ENCODE measurements at regions of chr9 and their contacts with region 1.

Region 1: DNA sequence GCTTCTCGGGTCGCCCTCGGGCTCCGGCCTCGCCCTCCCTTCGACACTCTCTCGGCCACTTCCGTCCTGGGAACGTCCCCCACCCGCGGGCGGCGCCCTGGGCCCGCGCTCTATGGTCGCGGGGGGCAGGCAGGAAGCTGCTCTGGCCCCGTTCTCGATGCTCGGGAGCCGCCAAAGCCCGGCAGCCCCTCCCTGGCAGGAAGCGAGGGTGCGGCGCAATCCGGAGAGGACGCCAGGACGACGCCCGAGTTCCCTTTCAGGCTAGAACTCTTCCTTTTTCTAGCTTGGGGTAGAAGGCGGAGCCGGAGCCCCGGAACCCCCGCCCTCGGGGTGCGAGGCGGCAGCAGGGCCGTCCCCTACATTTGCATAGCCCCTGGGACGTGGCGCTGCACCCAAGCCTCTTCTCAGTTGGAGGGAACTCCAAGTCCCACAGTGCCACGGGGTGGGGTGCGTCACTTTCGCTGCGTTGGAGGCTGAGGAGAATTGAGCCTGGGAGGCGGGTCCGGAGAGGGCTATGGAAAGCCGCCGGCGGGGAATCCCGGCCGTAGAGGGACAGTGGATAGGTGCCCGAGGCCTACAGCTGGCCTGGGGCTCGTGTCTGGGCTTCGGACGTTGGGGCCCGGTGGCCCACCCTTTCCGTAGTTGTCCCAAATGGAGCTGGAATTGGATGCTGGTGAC is at the starts of genes CREB3 and TLN1:
- DNase-seq: peak; percentile 99
- H3K4me3 Mint-ChIP-seq: no peak within 1 kb of the TSS
- H3K27ac Mint-ChIP-seq: peak within 1 kb of the TSS; percentile 92
- H3K4me1 Mint-ChIP-seq: peaks cover 22% of the 10 kb centered on the region
- H3K27me3 Mint-ChIP-seq: no peaks in the 10 kb centered on the region
- total RNA-seq, gene CREB3: 27.0 and 27.6 TPM in 2 replicates
- total RNA-seq, gene TLN1: 220 and 243 TPM in 2 replicates

Region 2: GRCh38 chr9:35618854-35619799 is 113.1 kb before region 1 on chr9:
- intact Hi-C with region 1: loop called (anchors 1 kb)
- DNase-seq: peak; percentile 82
- H3K4me3 Mint-ChIP-seq: peak overlapping the region; percentile 81
- H3K27ac Mint-ChIP-seq: peak overlapping the region; percentile 95
- H3K4me1 Mint-ChIP-seq: peaks cover 59% of the 10 kb centered on the region
- H3K27me3 Mint-ChIP-seq: peaks cover 1% of the 10 kb centered on the region

Region 3: GRCh38 chr9:35657546-35658136 is 74.6 kb before region 1 on chr9 and contains the start of gene RMRP:
- intact Hi-C with region 1: loop called (anchors 1 kb)
- DNase-seq: peak; percentile 96
- H3K4me3 Mint-ChIP-seq: peak within 1 kb of the TSS; percentile 92
- H3K27ac Mint-ChIP-seq: peak within 1 kb of the TSS; percentile 99
- H3K4me1 Mint-ChIP-seq: peaks cover 58% of the 10 kb centered on the region
- H3K27me3 Mint-ChIP-seq: peaks cover 7% of the 10 kb centered on the region
- total RNA-seq, gene RMRP: 5,949 and 6,301 TPM in 2 replicates

Region 4: DNA sequence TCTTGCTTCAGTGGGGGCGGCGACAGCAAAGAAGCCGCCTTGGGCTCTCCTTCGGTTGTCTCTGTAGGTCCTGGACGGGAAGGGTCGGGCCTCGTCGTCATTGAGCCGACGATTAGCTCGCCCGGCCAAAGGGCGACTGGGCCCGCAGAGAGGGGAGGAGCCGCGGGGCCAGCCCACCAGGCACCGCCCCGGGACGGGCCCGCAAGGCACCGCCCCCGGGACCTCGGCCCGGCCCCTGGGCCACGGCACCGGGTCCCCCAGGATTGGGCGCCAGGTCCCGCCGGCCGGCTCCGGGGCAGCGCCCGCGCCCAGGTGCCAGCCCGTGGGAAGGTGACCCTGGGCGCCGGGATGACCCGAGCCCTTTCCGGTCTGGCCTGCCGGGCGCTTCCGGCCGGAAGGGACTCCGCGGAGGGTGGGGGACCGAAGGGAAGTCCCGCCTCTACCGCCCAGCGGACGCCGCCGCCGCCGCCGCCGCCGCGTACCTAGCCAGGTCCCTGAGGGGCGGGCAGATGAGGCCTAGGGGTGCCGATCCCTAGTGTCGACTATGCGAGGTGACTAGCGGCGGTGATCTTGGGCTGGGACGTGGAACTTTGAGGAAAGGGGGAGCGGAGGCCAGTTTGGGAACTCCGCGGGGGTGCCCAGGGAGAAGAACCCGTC is 16.7 kb after region 1 on chr9 and contains the starts of genes GBA2 and RGP1:
- intact Hi-C with region 1: loop called (anchors 1 kb)
- DNase-seq: peak; percentile 93
- H3K4me3 Mint-ChIP-seq: peak within 1 kb of the TSS; percentile 94
- H3K27ac Mint-ChIP-seq: peak within 1 kb of the TSS; percentile 87
- H3K4me1 Mint-ChIP-seq: peaks cover 47% of the 10 kb centered on the region
- H3K27me3 Mint-ChIP-seq: no peaks in the 10 kb centered on the region
- total RNA-seq, gene GBA2: 46.7 and 50.1 TPM in 2 replicates
- total RNA-seq, gene RGP1: 16.3 and 16.7 TPM in 2 replicates

Region 5: GRCh38 chr9:35882263-35882848 is 150.1 kb after region 1 on chr9:
- intact Hi-C with region 1: loop called (anchors 1 kb)
- DNase-seq: peak; percentile 93
- H3K4me3 Mint-ChIP-seq: no peak overlapping the region
- H3K27ac Mint-ChIP-seq: no peak overlapping the region
- H3K4me1 Mint-ChIP-seq: no peaks in the 10 kb centered on the region
- H3K27me3 Mint-ChIP-seq: peaks cover 46% of the 10 kb centered on the region

Region 6: DNA sequence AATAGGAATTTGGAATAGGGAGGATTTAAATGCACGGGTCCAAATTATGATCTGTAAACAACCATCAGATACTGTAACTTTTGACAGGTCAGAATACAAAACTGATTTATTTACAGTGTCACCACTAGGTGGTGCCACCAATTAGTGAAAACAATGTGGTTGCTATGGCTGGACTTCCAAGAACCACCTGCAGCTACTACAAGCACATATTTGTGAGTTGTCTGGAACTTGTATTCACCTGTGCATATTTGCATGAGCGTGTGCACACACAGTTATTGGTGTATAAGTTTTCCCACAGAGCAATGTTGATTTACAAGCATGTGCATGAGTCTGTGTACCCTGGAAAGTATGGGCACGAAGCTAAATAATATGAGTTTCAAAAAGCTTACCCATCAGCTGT is 170.8 kb after region 1 on chr9:
- intact Hi-C with region 1: no loop called
- DNase-seq: peak; percentile 85
- H3K4me3 Mint-ChIP-seq: no peak overlapping the region
- H3K27ac Mint-ChIP-seq: no peak overlapping the region
- H3K4me1 Mint-ChIP-seq: peaks cover 8% of the 10 kb centered on the region
- H3K27me3 Mint-ChIP-seq: peaks cover 19% of the 10 kb centered on the region

Region 7: GRCh38 chr9:36632892-36633291 is 900.6 kb after region 1 on chr9:
- intact Hi-C with region 1: no loop called
- DNase-seq: no peak
- H3K4me3 Mint-ChIP-seq: no peak overlapping the region
- H3K27ac Mint-ChIP-seq: no peak overlapping the region
- H3K4me1 Mint-ChIP-seq: peaks cover 3% of the 10 kb centered on the region
- H3K27me3 Mint-ChIP-seq: no peaks in the 10 kb centered on the region

Measured in activated CD4-positive, alpha-beta T cell treated with anti-CD3 and anti-CD28 coated beads, Interleukin-2, amount 10 ng/mL, durations not matched to agents 24 days and 14 days (primary cell).